GM10248 (cell line): ENCODE measurements at regions of chr17 and their contacts with region 1.

Region 1: DNA sequence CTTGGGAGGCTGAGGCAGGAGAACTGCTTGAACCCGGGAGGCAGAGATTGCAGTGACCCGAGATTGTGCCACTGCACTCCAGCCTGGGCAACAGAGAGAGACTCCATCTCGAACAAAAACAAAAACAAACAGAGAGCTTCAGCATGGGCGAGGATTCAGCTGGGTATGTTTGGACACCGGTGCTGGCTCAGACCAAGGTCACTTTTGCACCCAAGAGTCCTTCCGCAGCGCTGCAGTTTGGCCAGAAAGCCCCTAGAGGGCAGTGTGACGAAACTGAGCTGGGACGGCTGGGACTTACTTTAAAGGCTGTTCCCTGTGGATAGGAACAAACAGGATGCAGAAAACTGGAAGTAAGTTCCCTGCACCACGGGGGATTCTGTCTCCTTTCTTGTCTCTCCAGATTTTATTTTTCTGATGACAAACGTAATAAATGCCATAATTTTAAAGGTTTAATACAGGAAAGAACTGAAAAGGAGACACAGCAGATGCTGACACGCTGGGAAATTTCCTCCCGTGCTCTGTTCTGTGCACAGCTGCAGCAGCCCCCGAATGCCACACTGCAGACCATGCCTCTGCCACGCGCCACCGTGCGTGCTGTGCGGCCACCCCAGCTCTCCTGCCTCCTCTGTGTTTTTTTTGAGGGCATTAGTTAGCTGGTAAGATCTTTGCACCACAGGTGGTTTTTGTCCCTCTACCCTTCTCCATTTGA is 25.2 kb upstream of the USP36 start:
- DNase-seq: peak; percentile 79
- CTCF ChIP-seq: peak; percentile 95

Region 2: GRCh38 chr17:78836420-78837021 is 29.3 kb before region 1 on chr17:
- CTCF ChIA-PET with region 1: no interaction called
- POLR2A ChIA-PET with region 1: no interaction called
- DNase-seq: no peak
- CTCF ChIP-seq: no peak

Region 3: DNA sequence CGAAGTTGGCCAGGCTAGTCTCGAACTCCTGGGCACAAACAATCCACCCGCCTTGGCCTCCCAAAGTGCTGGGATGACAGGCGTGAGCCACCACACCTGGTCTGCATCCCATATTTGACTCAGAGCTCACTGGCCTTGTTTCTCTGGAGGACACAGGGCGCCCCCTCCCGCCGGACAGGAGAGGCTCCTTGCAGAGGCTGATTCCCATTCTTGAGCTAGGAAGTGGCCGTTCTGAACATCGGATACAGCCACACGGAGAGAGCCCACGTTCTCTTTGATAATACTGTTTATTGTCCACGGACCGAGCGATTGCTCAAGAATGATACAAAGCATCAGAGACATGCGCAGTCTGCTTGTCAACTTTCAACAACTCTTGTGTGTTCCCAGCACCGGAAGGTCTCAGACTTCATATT is 13.1 kb before region 1 on chr17:
- CTCF ChIA-PET with region 1: interaction called, 18 read pairs
- POLR2A ChIA-PET with region 1: no interaction called
- DNase-seq: no peak
- CTCF ChIP-seq: no peak

Region 4: DNA sequence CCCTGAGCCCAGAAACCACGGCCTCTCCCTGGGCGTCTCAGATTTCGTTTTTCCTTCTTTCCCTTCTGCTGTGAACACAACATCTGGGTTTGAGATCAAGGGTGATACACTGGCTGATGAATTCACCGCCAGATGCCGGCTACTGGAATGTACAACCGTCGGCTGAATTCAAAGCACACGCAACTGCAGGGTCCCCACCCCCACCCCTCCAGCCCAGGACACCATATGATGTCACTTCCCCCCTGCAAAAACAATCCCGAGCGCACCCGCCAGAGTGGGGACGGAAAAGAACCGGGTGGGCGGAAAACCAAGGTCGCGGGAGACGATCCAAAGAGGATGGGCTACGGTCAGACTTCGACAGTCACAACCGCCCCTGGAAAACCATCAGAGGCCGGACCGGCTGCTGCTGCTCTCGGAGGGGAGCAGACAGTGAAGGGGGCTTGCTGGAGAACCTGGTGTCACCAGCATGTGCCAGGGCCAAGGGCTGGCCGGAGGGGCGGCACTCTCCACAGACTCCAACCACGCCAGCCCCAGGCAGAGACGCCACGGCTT is 13.9 kb after region 1 on chr17:
- CTCF ChIA-PET with region 1: interaction called, 34 read pairs
- POLR2A ChIA-PET with region 1: no interaction called
- DNase-seq: no peak
- CTCF ChIP-seq: no peak

Region 5: GRCh38 chr17:78885616-78886355 is 19.9 kb after region 1 on chr17:
- CTCF ChIA-PET with region 1: interaction called, 13 read pairs
- POLR2A ChIA-PET with region 1: no interaction called
- DNase-seq: no peak
- CTCF ChIP-seq: no peak

Region 6: GRCh38 chr17:78970834-78971773 is 105.3 kb after region 1 on chr17:
- CTCF ChIA-PET with region 1: interaction called, 49 read pairs
- POLR2A ChIA-PET with region 1: no interaction called
- DNase-seq: peak; percentile 87
- CTCF ChIP-seq: peak; percentile 89